HepG2 (cell line): ENCODE measurements at regions of chr15 and their contacts with region 1.

Region 1: DNA sequence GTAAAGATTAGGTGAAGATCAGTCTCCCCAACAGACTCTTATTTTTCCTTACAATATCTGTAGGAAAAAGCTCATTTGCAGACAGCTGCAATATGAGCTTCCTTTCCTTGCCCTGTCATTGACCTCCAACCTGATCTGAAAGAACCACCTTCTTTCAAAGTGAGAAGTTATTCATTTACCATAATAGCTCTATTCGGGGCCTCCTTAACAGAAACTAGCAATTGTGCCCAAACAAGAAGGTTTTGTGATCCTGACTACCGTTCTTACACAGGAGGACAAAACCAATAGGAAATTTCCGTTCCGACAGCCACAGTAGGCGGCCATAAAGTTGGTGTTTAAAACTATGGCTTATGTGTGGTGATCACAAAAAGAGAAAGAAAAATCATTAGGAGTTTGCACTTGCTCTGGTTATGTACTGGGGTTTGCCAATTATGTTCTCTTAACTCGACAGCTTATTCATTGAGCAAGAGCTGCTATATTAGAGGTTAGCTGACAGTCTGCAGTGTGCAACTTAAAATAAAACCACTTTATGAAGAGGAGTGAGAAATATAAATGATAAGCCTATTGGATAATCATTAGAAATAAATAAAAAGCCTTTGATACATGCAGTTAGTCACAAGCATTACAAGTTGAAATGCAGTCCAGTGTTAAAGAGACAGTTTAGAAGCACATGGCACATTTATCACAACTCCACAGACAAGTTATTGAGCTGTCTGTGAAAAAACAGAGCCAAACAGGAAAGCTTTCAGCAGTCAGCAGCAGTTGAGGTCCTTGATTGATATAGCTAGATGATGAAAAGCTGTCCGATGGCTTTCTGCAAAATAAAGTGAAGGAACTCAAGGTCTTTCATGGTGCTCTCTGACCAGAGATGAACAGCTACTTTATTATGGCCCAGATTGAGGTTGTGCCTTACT is 199.8 kb downstream of the WDR72 start:
- DNase-seq: peak; percentile 75
- ATAC-seq: peak; percentile 98
- H3K4me3 ChIP-seq: peak overlapping the region in 2 of 3 experiments; percentile 9 to 21; a peak in 2 of 6 replicates
- H3K27ac ChIP-seq: peak overlapping the region; percentile 76
- H3K4me1 ChIP-seq: peaks cover 31% of the 10 kb centered on the region
- H3K27me3 ChIP-seq: no peaks in the 10 kb centered on the region
- CTCF ChIP-seq: no peak
- EP300 ChIP-seq: peak in 1 of 2 experiments; percentile 62; a peak in 1 of 4 replicates
- POLR2A ChIP-seq: no peak
- RAD21 ChIP-seq: no peak

Region 2: DNA sequence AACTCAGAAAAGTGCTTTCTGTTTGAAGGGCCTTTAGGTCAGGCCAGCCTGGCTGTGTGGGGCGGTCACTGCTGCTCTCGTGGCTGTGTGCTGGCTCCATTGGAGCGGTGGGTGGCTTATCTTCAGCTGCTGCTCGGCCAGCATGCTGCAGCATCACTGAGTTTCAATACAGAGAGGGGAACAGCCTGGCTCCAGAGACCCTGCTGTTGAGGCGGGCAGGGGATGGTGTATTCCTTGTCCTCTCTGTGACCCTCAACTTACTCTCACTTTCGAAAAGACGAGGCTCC is 521.0 kb before region 1 on chr15:
- CTCF ChIA-PET with region 1: no interaction called
- POLR2A ChIA-PET with region 1: no interaction called
- in situ Hi-C with region 1: no loop called
- intact Hi-C with region 1: loop called (anchors 5 kb)
- DNase-seq: no peak
- ATAC-seq: peak; percentile 36
- H3K4me3 ChIP-seq: peak overlapping the region in 1 of 3 experiments; percentile 56; a peak in 2 of 6 replicates
- H3K27ac ChIP-seq: no peak overlapping the region
- H3K4me1 ChIP-seq: peaks cover 46% of the 10 kb centered on the region
- H3K27me3 ChIP-seq: no peaks in the 10 kb centered on the region
- CTCF ChIP-seq: no peak
- EP300 ChIP-seq: no peak
- POLR2A ChIP-seq: no peak
- RAD21 ChIP-seq: no peak